ENCODE measurements at regions of chr1 and their contacts with region 1.

Region 1: GRCh38 chr1:20185834-20186782 is at the starts of genes PLA2G2C and UBXN10:
- DNase-seq: peak; percentile 64
- H3K4me3 Mint-ChIP-seq: peak within 1 kb of the TSS; percentile 86
- H3K27ac Mint-ChIP-seq: peak within 1 kb of the TSS; percentile 90
- H3K4me1 Mint-ChIP-seq: peaks cover 63% of the 10 kb centered on the region
- H3K27me3 Mint-ChIP-seq: peaks cover 11% of the 10 kb centered on the region
- total RNA-seq, gene PLA2G2C: 0.44 and 0.65 TPM in 2 replicates
- total RNA-seq, gene UBXN10: 2.5 and 2.9 TPM in 2 replicates

Region 2: GRCh38 chr1:19762175-19762779 is 423.8 kb before region 1 on chr1:
- intact Hi-C with region 1: loop called (anchors 10 kb)
- DNase-seq: no peak
- H3K4me3 Mint-ChIP-seq: no peak overlapping the region
- H3K27ac Mint-ChIP-seq: no peak overlapping the region
- H3K4me1 Mint-ChIP-seq: peaks cover 18% of the 10 kb centered on the region
- H3K27me3 Mint-ChIP-seq: no peaks in the 10 kb centered on the region

Region 3: GRCh38 chr1:20151906-20152598 is 34.1 kb before region 1 on chr1:
- intact Hi-C with region 1: loop called (anchors 5 kb)
- DNase-seq: peak; percentile 69
- H3K4me3 Mint-ChIP-seq: peak overlapping the region; percentile 73
- H3K27ac Mint-ChIP-seq: peak overlapping the region; percentile 20
- H3K4me1 Mint-ChIP-seq: peaks cover 17% of the 10 kb centered on the region
- H3K27me3 Mint-ChIP-seq: no peaks in the 10 kb centered on the region

Region 4: GRCh38 chr1:20248971-20249612 is 63.0 kb after region 1 on chr1:
- intact Hi-C with region 1: loop called (anchors 2 kb)
- DNase-seq: peak; percentile 12
- H3K4me3 Mint-ChIP-seq: peak overlapping the region; percentile 6
- H3K27ac Mint-ChIP-seq: peak overlapping the region; percentile 83
- H3K4me1 Mint-ChIP-seq: peaks cover 17% of the 10 kb centered on the region
- H3K27me3 Mint-ChIP-seq: peaks cover 6% of the 10 kb centered on the region

Region 5: GRCh38 chr1:20426923-20427322 is 240.8 kb after region 1 on chr1:
- intact Hi-C with region 1: no loop called
- DNase-seq: peak; percentile 5
- H3K4me3 Mint-ChIP-seq: no peak overlapping the region
- H3K27ac Mint-ChIP-seq: no peak overlapping the region
- H3K4me1 Mint-ChIP-seq: peaks cover 8% of the 10 kb centered on the region
- H3K27me3 Mint-ChIP-seq: peaks cover 16% of the 10 kb centered on the region